MCF 10A (cell line): ENCODE measurements at regions of chr6 and their contacts with region 1.

Region 1: GRCh38 chr6:134097114-134097707 is 44.8 kb upstream of the SLC2A12 start:
- DNase-seq: peak; percentile 83
- H3K4me3 Mint-ChIP-seq: no peak overlapping the region
- H3K27ac Mint-ChIP-seq: no peak overlapping the region
- H3K4me1 Mint-ChIP-seq: no peaks in the 10 kb centered on the region
- H3K27me3 Mint-ChIP-seq: peaks cover 13% of the 10 kb centered on the region
- CTCF ChIP-seq: peak; percentile 61

Region 2: DNA sequence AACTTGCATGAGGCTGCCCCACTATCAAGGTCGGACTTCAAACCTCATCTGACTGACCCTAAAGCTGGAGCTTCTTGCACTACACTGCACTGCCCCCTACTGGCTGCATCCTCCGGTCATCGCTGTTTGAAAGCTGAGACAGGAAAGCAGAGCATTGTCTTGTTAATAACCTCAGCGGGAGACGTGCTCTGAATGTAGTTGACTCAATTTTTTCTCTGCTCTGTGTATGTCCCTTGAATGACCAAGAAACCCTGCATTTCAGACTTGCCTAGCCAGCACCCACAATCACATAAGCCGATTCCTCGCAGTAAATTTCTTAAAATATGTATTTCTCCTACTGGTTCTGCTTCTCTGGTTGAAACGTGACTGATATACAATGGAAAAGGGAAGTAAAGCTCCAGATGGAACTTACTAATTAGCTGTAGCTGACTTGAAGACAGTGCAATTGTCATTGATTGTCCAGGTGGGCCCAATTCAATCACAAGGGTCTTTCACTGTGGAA is 180.5 kb before region 1 on chr6:
- CTCF ChIA-PET with region 1: interaction called, 456 read pairs
- POLR2A ChIA-PET with region 1: interaction called, 34 read pairs
- intact Hi-C with region 1: no loop called
- DNase-seq: peak; percentile 89
- H3K4me3 Mint-ChIP-seq: no peak overlapping the region
- H3K27ac Mint-ChIP-seq: no peak overlapping the region
- H3K4me1 Mint-ChIP-seq: peaks cover 14% of the 10 kb centered on the region
- H3K27me3 Mint-ChIP-seq: no peaks in the 10 kb centered on the region
- CTCF ChIP-seq: peak; percentile 87

Region 3: GRCh38 chr6:133945158-133945557 is 152.1 kb before region 1 on chr6:
- CTCF ChIA-PET with region 1: interaction called, 23 read pairs
- POLR2A ChIA-PET with region 1: interaction called, 3 read pairs
- intact Hi-C with region 1: no loop called
- DNase-seq: peak; percentile 27
- H3K4me3 Mint-ChIP-seq: no peak overlapping the region
- H3K27ac Mint-ChIP-seq: no peak overlapping the region
- H3K4me1 Mint-ChIP-seq: no peaks in the 10 kb centered on the region
- H3K27me3 Mint-ChIP-seq: no peaks in the 10 kb centered on the region
- CTCF ChIP-seq: no peak

Region 4: GRCh38 chr6:133966654-133967329 is 130.4 kb before region 1 on chr6:
- CTCF ChIA-PET with region 1: interaction called, 11 read pairs
- POLR2A ChIA-PET with region 1: interaction called, 3 read pairs
- intact Hi-C with region 1: no loop called
- DNase-seq: no peak
- H3K4me3 Mint-ChIP-seq: no peak overlapping the region
- H3K27ac Mint-ChIP-seq: no peak overlapping the region
- H3K4me1 Mint-ChIP-seq: peaks cover 39% of the 10 kb centered on the region
- H3K27me3 Mint-ChIP-seq: no peaks in the 10 kb centered on the region
- CTCF ChIP-seq: no peak

Region 5: GRCh38 chr6:133983099-133983939 is 113.9 kb before region 1 on chr6:
- CTCF ChIA-PET with region 1: interaction called, 18 read pairs
- POLR2A ChIA-PET with region 1: no interaction called
- intact Hi-C with region 1: no loop called
- DNase-seq: peak; percentile 80
- H3K4me3 Mint-ChIP-seq: no peak overlapping the region
- H3K27ac Mint-ChIP-seq: no peak overlapping the region
- H3K4me1 Mint-ChIP-seq: peaks cover 20% of the 10 kb centered on the region
- H3K27me3 Mint-ChIP-seq: no peaks in the 10 kb centered on the region
- CTCF ChIP-seq: no peak

Region 6: GRCh38 chr6:134021396-134022122 is 75.7 kb before region 1 on chr6:
- CTCF ChIA-PET with region 1: interaction called, 16 read pairs
- POLR2A ChIA-PET with region 1: no interaction called
- intact Hi-C with region 1: no loop called
- DNase-seq: no peak
- H3K4me3 Mint-ChIP-seq: no peak overlapping the region
- H3K27ac Mint-ChIP-seq: no peak overlapping the region
- H3K4me1 Mint-ChIP-seq: peaks cover 4% of the 10 kb centered on the region
- H3K27me3 Mint-ChIP-seq: no peaks in the 10 kb centered on the region
- CTCF ChIP-seq: no peak

Region 7: DNA sequence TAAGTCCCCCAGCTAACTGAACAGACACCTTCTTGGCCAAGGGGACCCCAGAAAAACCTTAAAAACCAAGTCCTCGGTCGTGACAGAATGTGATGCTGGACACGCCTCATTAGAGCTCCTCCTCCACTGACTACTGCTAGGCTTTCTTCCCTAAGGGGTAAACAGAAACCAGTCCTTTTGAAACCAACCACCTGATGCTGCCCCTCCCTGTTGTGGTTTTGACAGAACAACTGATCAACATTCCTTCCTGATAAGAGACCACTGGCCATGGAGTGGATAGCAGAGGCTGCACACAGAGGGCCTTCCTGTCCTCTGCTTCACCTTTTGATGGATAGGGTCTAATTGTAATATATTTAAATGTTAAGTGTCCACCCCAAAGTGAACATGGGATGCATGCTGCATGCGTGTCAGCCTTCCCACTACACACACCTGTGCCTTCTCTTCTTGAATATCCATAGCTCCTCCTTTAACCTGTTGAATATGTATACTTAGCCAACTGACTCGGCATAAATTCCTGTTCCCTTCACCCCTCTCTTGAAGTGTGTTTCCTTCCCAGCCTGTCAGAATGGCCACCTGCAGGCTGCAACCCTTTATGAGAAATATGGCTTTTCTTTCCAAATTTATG is 16.9 kb before region 1 on chr6:
- CTCF ChIA-PET with region 1: interaction called, 48 read pairs
- POLR2A ChIA-PET with region 1: no interaction called
- intact Hi-C with region 1: no loop called
- DNase-seq: peak; percentile 17
- H3K4me3 Mint-ChIP-seq: no peak overlapping the region
- H3K27ac Mint-ChIP-seq: no peak overlapping the region
- H3K4me1 Mint-ChIP-seq: peaks cover 14% of the 10 kb centered on the region
- H3K27me3 Mint-ChIP-seq: no peaks in the 10 kb centered on the region
- CTCF ChIP-seq: no peak